ENCODE measurements at regions of chr12 and their contacts with region 1.

Region 1: DNA sequence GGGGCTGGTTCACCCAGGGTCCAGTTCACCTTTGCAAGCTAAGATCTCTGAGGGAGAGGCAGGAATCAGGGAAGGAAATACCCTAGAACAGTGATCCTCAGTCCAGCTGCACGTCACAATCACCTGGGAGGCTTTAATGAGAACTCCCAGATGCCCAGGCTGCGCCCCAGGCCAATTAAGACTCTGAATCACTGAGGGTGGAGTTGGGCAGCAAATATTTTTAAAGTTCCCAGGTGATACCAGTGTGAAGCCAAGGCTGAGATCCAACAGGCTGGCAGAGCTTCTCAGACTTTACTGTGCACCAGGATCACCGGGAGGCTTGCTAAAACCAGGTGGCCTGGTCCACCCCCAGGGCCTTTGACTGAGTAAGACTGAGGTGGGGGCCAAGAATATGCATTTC is 23.8 kb downstream of the MYL2 start:
- DNase-seq: no peak
- ATAC-seq: no peak
- H3K4me3 Mint-ChIP-seq: no peak overlapping the region
- H3K27ac Mint-ChIP-seq: no peak overlapping the region
- H3K4me1 Mint-ChIP-seq: peaks cover 7% of the 10 kb centered on the region
- H3K27me3 Mint-ChIP-seq: no peaks in the 10 kb centered on the region; the same call in 1 of the 2 replicates
- CTCF ChIP-seq: no peak

Region 2: DNA sequence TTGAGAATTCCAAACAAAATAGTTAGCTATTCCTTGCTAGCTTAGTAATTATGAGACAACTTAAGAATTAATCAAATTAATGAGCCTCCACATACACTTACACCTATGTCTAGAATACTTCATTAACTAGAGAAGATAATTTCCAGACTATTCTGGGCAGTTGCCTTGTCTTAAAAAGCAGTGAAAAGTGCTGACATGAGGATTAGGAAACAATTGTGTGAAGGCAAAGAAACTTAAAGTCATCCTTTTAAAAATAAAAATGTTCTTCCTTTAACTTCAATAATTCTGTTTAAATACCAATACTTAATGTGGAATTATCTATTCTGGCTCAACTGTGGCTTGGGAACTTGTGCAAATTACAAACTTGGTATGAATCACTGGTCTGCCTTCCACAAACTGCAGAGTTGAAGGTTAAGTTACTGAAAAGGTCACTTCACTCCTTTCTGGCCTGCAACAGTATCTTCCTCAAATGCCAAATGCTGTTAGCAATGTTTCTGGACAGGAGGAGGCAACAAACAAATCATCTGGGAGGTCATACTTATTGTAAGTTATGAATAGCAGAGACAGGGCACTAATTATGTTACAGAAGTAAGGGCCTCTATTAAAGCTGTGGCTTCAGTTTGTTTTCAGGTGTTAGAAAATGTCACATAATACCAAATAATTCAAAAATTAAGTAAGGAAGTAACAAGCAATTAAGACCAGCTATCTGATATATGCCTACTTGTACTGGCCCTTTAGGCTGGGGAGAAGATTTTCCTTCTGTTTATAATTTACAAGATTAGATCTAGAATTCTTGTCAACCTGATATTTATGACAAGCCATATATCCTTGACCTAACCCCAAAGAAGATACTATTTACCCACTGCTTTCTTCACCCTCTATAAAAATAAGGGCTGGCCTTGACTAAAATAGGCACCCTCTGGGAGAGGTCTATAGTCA is 332.6 kb before region 1 on chr12:
- CTCF ChIA-PET with region 1: no interaction called
- POLR2A ChIA-PET with region 1: no interaction called
- DNase-seq: no peak
- ATAC-seq: no peak
- H3K4me3 Mint-ChIP-seq: no peak overlapping the region
- H3K27ac Mint-ChIP-seq: peak overlapping the region; percentile 41; the same call in 1 of the 2 replicates
- H3K4me1 Mint-ChIP-seq: peaks cover 29% of the 10 kb centered on the region
- H3K27me3 Mint-ChIP-seq: no peaks in the 10 kb centered on the region
- CTCF ChIP-seq: no peak

Region 3: DNA sequence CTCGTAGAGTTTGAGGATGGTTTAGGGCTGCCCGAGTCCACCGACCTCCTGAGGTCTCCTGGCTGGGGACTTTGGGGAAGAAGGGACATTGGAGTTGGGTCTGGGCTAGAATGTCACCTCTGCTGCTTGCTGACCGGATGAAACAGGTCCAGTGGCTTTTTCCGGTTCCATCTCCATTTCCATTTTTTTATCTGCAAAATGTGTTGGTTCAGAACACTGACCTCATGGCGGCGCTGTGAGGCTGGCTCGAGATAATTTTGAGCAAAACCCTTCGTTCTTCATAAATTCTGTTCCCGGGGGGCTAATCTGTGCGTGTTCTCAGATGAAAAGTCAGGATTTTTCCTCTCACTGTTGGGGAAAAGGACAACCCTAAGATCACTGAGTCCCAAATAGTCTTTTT is 35.5 kb after region 1 on chr12:
- CTCF ChIA-PET with region 1: interaction called, 21 read pairs
- POLR2A ChIA-PET with region 1: no interaction called
- DNase-seq: peak; percentile 60
- ATAC-seq: no peak
- H3K4me3 Mint-ChIP-seq: no peak overlapping the region
- H3K27ac Mint-ChIP-seq: no peak overlapping the region
- H3K4me1 Mint-ChIP-seq: peaks cover 42% of the 10 kb centered on the region
- H3K27me3 Mint-ChIP-seq: peaks cover 12% of the 10 kb centered on the region
- CTCF ChIP-seq: peak; percentile 37

Region 4: DNA sequence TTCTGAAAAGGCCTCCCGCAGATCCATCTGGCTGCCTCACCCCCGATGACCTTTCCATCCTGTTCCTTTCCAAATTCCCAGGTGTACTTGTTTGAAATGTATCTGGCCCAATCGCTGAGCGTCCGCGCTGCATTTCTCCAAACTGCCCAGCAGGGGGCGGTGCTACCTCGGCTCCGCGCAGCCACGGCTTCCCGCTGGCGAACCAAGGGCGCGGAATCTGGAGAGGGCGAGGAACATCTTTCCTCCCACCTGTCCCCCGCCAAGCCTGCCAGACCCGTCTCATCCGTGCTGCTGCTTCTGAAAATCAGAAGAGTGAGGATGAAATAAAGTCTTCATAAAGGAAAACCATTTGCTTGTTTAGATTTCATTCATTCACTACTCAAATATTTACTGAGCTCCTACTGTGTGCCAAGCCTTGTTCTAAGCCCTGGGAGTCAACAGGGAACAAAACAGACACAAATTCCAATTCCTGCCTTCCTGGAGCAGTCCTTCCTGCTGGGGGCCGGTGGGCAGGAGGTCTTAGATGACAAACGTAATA is 40.6 kb after region 1 on chr12:
- CTCF ChIA-PET with region 1: interaction called, 21 read pairs
- POLR2A ChIA-PET with region 1: no interaction called
- DNase-seq: peak; percentile 86
- ATAC-seq: peak; percentile 78
- H3K4me3 Mint-ChIP-seq: peak overlapping the region; percentile 78
- H3K27ac Mint-ChIP-seq: peak overlapping the region; percentile 99
- H3K4me1 Mint-ChIP-seq: peaks cover 62% of the 10 kb centered on the region
- H3K27me3 Mint-ChIP-seq: peaks cover 18% of the 10 kb centered on the region
- CTCF ChIP-seq: peak; percentile 89

Region 5: GRCh38 chr12:110966081-110966760 is 69.7 kb after region 1 on chr12:
- CTCF ChIA-PET with region 1: no interaction called
- POLR2A ChIA-PET with region 1: no interaction called
- DNase-seq: no peak
- ATAC-seq: no peak
- H3K4me3 Mint-ChIP-seq: no peak overlapping the region
- H3K27ac Mint-ChIP-seq: no peak overlapping the region
- H3K4me1 Mint-ChIP-seq: no peaks in the 10 kb centered on the region
- H3K27me3 Mint-ChIP-seq: peaks cover 41% of the 10 kb centered on the region
- CTCF ChIP-seq: no peak